ENCODE measurements at regions of chr1 and their contacts with region 1.

Region 1: GRCh38 chr1:26035959-26036755 is 9.8 kb downstream of the SLC30A2 start:
- DNase-seq: no peak
- H3K4me3 ChIP-seq: peak overlapping the region; percentile 90
- H3K27me3 ChIP-seq: peaks cover 4% of the 10 kb centered on the region; the same call in 1 of the 2 replicates
- CTCF ChIP-seq: peak; percentile 99

Region 2: GRCh38 chr1:26005434-26006105 is 30.6 kb before region 1 on chr1:
- CTCF ChIA-PET with region 1: no interaction called
- POLR2A ChIA-PET with region 1: no interaction called
- DNase-seq: no peak
- H3K4me3 ChIP-seq: no peak overlapping the region
- H3K27me3 ChIP-seq: no peaks in the 10 kb centered on the region
- CTCF ChIP-seq: no peak

Region 3: GRCh38 chr1:26084091-26084561 is 48.0 kb after region 1 on chr1:
- CTCF ChIA-PET with region 1: interaction called, 13 read pairs
- POLR2A ChIA-PET with region 1: interaction called, 3 read pairs
- DNase-seq: no peak
- H3K4me3 ChIP-seq: no peak overlapping the region
- H3K27me3 ChIP-seq: peaks cover 11% of the 10 kb centered on the region
- CTCF ChIP-seq: no peak

Region 4: DNA sequence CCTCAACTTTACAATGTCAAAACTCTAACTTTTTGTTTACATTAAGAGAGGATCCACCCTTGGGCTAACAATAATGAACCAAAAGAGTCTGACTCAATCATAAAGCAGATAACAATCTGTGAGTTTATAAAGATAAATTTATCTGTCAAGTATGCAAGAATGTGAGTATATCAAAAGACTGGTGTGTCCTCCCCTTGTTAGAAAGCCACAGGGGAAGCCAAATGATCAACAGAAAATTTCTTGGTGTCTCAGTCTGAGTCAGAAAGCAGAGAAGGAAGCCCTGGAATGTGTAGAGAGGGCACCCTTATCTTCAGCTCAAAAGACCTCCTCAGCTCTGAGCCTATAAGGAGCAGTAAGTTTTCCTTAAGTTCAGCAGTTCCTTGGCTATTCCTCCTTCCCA is 61.5 kb after region 1 on chr1:
- CTCF ChIA-PET with region 1: interaction called, 17 read pairs
- POLR2A ChIA-PET with region 1: no interaction called
- DNase-seq: no peak
- H3K4me3 ChIP-seq: no peak overlapping the region
- H3K27me3 ChIP-seq: peaks cover 8% of the 10 kb centered on the region
- CTCF ChIP-seq: no peak

Region 5: DNA sequence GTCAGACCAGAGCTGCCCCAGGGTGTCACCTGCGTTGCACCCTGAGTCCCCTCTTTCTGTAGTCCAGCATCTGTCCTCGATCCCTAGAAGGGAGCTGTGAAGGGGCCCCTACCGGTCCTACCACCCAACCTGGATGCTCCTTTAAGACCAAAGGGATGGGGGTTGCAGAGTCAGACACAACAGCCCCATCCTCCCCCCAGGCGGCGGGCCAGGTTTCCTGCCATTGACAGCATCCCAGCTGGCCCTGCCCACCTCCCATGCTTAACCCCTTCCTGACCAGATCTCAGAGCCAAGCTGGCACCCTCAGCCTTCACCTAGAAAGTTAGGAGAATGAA is 120.5 kb after region 1 on chr1:
- CTCF ChIA-PET with region 1: interaction called, 10 read pairs
- POLR2A ChIA-PET with region 1: no interaction called
- DNase-seq: no peak
- H3K4me3 ChIP-seq: no peak overlapping the region
- H3K27me3 ChIP-seq: peaks cover 24% of the 10 kb centered on the region
- CTCF ChIP-seq: no peak